ENCODE measurements at regions of chr20 and their contacts with region 1.

Region 1: DNA sequence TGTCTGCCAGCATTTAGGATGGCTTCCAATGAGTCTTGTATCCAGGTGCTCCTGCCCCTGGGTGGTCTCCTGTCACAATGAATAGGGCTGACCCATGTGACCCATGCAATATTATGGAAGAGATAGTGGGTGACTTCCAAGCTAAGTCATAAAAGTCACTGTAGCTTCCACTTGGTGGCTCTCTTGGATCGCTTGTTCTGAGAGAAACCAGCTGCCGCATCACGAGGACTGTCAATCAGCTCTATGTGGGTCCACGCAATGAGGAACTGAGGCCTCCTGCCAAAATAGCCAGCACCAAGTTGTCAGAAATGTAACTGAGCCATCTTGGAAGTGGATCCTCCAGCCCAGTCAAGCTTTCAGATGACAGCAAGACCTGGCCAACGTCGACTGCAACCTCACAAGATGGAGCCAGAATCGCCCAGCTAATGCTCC is 14.9 kb upstream of the MATN4 start:
- DNase-seq: peak; percentile 84 to 86
- H3K4me3 ChIP-seq: no peak overlapping the region
- H3K4me3 Mint-ChIP-seq: no peak overlapping the region
- H3K27ac Mint-ChIP-seq: peak overlapping the region; percentile 3
- H3K4me1 ChIP-seq: peaks cover 8% of the 10 kb centered on the region; the same call in 1 of the 2 replicates
- H3K4me1 Mint-ChIP-seq: no peaks in the 10 kb centered on the region
- H3K27me3 ChIP-seq: no peaks in the 10 kb centered on the region
- H3K27me3 Mint-ChIP-seq: no peaks in the 10 kb centered on the region
- CTCF ChIP-seq: peak; percentile 55 to 79

Region 2: DNA sequence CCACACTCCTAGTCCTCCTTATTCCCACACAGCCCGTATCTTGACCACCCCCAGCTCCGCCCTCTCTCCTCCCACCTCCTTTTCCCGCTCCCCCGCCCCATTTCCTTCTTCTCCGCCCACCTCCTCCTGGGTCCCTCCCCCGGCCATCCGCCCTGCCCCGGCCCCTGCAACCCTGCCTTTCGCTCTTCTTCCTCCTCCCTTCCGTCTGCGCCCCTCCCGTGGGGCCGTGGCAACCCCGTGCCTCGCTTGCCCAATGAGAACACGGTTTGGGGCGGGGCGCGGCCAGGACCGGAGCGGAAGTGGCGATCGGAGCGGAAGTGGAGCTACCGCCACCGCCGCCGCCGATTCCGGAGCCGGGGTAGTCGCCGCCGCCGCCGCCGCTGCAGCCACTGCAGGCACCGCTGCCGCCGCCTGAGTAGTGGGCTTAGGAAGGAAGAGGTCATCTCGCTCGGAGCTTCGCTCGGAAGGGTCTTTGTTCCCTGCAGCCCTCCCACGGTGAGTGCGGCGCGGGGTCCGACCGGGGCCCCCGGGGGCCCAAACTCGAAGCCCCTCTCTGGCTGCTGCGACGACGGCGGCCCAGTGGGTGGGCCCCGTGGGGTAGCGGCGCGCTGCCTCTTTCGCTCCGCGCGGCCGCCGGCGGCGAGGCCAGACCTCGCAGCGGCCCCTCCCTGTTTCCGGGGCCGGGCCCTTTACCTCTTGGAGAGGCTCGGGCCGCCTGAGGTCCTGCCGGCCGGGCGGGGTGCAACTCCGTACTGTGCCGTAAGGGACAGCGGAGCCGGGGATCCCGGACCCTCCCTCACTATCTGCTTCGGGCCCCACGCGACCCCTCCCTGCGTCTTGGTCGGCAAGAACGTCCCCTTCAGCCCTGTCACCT is 437.3 kb before region 1 on chr20 and contains the start of gene YWHAB:
- CTCF ChIA-PET with region 1: no interaction called
- POLR2A ChIA-PET with region 1: interaction called, 11 read pairs
- intact Hi-C with region 1: no loop called
- DNase-seq: peak; percentile 100
- H3K4me3 ChIP-seq: peak within 1 kb of the TSS; percentile 98
- H3K4me3 Mint-ChIP-seq: peak within 1 kb of the TSS; percentile 99
- H3K27ac Mint-ChIP-seq: peak within 1 kb of the TSS; percentile 97
- H3K4me1 ChIP-seq: peaks cover 34% of the 10 kb centered on the region
- H3K4me1 Mint-ChIP-seq: peaks cover 34% of the 10 kb centered on the region
- H3K27me3 ChIP-seq: no peaks in the 10 kb centered on the region
- H3K27me3 Mint-ChIP-seq: no peaks in the 10 kb centered on the region
- CTCF ChIP-seq: peak; percentile 19 to 22
- total RNA-seq, gene YWHAB: 522 and 539 TPM in 2 replicates

Region 3: DNA sequence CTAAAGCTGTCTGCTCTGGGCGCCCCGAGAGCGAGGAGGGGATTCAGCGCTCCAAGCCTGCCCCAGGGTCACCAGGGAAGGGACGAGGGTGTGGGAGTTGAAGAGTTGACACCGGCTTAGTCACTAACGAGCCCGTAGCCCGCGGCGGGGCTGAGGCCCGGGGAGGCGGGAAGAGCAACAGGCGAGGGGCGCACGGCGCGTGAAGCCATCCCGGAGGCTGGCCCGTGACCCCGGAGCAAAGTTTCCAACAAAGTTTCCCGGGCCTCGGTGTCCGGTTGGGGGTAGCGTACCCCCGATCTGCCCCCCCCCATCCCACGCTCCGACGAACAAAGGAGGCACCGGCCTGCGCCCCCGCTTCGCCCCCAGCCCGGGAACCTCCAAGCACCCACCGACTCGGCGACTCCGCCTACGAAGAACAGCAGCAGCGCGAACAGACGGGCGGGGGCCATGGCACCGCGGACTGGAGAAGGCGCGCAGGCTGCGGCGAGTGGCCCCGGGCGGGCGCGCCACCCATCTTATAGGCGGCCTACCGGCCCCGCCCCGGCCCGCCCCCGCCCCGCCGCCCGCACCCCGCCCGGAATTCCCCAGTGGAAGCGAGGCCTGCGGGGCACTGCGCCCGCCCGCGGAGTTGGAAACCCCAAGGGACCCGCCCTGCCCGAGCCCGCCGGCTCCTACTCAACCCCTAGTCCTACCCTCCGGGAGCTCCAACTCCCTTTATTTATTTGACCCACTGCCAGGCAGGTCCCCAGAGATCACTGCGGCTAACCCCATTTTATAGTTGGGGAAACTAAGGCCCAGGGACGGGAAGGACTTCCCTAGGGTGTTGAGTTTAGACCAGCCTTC is 25.2 kb after region 1 on chr20 and contains the start of gene SDC4:
- CTCF ChIA-PET with region 1: interaction called, 44 read pairs
- POLR2A ChIA-PET with region 1: interaction called, 21 read pairs
- intact Hi-C with region 1: loop called (anchors 1 kb)
- DNase-seq: peak; percentile 83 to 94
- H3K4me3 ChIP-seq: peak within 1 kb of the TSS; percentile 88
- H3K4me3 Mint-ChIP-seq: peak within 1 kb of the TSS; percentile 97
- H3K27ac Mint-ChIP-seq: peak within 1 kb of the TSS; percentile 77
- H3K4me1 ChIP-seq: peaks cover 45% of the 10 kb centered on the region
- H3K4me1 Mint-ChIP-seq: peaks cover 47% of the 10 kb centered on the region
- H3K27me3 ChIP-seq: no peaks in the 10 kb centered on the region
- H3K27me3 Mint-ChIP-seq: no peaks in the 10 kb centered on the region
- CTCF ChIP-seq: no peak
- total RNA-seq, gene SDC4: 227 and 242 TPM in 2 replicates

Region 4: DNA sequence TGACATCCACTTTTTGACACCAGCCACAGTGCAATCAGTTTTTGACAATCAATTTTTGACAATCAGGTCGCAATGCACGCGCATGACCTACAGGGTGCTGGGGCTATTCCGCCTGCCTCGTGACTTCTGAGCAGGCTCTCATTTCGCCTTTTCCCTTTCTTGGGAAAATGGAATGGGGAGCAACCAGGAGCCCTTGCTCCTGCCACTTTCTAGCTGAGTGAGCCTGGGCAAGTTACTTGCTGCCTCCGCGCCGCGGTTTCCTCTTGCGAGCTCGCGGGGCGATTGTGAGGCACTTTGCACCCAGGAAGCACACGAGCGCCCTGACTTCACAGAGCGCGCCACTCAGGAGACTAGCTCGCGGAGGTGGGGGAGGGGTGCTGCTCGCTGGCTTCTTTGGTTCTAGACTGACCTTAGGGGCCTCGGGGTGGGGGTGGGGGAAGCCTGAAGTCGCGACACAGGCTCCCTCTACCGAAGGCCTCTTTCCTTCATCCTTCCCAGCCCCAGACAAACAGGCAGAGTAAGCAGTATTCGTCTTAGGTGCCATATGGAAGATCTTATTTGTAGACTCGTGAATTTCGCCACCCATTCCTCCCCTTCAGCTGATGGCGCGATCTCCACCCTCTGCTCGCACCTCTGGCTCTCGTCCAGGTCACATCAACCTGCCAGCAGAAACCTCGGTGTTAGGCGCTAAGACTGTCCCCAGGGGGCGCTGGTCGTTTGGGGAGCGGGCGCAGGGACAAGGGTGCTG is 50.6 kb after region 1 on chr20:
- CTCF ChIA-PET with region 1: interaction called, 27 read pairs
- POLR2A ChIA-PET with region 1: interaction called, 6 read pairs
- intact Hi-C with region 1: no loop called
- DNase-seq: peak; percentile 85 to 90
- H3K4me3 ChIP-seq: no peak overlapping the region
- H3K4me3 Mint-ChIP-seq: peak overlapping the region; percentile 64
- H3K27ac Mint-ChIP-seq: no peak overlapping the region
- H3K4me1 ChIP-seq: no peaks in the 10 kb centered on the region
- H3K4me1 Mint-ChIP-seq: no peaks in the 10 kb centered on the region
- H3K27me3 ChIP-seq: no peaks in the 10 kb centered on the region
- H3K27me3 Mint-ChIP-seq: no peaks in the 10 kb centered on the region
- CTCF ChIP-seq: peak; percentile 90 to 93

Region 5: DNA sequence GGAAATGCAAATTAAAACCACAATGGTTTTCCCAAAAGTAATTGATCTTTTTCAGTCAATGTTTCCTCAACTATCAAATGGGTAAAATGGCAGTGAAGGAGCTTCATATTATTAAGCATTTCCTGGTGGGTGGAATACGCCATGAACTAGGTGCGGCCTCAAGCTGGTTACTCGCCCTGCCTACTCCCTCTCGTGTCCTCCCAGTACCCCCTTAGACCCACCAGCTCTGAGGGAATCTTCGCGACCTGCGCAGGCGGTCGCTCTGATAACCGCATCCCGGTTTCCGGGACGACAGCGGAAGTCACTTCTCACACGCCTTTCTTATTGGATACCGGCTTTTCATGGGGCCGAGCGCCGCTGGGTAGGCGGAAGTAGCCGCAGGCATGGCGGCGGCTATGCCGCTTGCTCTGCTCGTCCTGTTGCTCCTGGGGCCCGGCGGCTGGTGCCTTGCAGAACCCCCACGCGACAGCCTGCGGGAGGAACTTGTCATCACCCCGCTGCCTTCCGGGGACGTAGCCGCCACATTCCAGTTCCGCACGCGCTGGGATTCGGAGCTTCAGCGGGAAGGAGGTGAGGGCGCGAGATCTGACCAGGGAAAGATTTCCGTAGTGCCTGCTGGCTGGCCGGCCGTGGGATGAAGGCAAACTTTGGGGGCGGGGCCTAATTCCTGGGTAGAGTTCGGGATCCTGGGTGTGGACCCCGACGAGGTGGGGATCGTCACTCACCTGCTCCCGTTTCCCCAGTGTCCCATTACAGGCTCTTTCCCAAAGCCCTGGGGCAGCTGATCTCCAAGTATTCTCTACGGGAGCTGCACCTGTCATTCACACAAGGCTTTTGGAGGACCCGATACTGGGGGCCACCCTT is 93.0 kb after region 1 on chr20 and contains the start of gene PIGT:
- CTCF ChIA-PET with region 1: interaction called, 19 read pairs
- POLR2A ChIA-PET with region 1: interaction called, 7 read pairs
- intact Hi-C with region 1: loop called (anchors 1 kb)
- DNase-seq: peak; percentile 95
- H3K4me3 ChIP-seq: peak within 1 kb of the TSS; percentile 89
- H3K4me3 Mint-ChIP-seq: peak within 1 kb of the TSS; percentile 87
- H3K27ac Mint-ChIP-seq: peak within 1 kb of the TSS; percentile 92
- H3K4me1 ChIP-seq: peaks cover 13% of the 10 kb centered on the region; the same call in 1 of the 2 replicates
- H3K4me1 Mint-ChIP-seq: peaks cover 6% of the 10 kb centered on the region
- H3K27me3 ChIP-seq: no peaks in the 10 kb centered on the region
- H3K27me3 Mint-ChIP-seq: no peaks in the 10 kb centered on the region
- CTCF ChIP-seq: peak in 1 of 2 experiments; percentile 30
- total RNA-seq, gene PIGT: 239 and 259 TPM in 2 replicates

Region 6: DNA sequence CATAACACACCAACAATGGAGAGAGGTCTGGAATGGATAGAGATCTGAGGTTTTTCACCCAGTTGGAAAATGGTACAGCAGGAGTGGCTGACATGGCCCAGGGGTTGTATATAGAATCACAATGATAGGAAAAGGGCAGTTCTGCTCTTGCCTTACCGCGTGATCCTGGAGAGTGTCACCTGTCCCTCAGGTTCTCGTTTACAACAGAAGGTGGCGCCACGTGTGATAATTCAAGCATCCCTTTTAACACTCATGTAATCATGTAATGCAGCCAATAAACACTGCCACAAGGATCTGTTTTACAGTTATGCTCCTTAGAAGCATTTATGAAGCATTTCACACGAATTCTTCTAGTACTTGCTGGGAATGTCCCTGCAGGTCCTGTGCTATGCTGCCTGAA is 133.7 kb after region 1 on chr20:
- CTCF ChIA-PET with region 1: interaction called, 12 read pairs
- POLR2A ChIA-PET with region 1: no interaction called
- intact Hi-C with region 1: no loop called
- DNase-seq: peak; percentile 68 to 73
- H3K4me3 ChIP-seq: no peak overlapping the region
- H3K4me3 Mint-ChIP-seq: no peak overlapping the region
- H3K27ac Mint-ChIP-seq: no peak overlapping the region
- H3K4me1 ChIP-seq: no peaks in the 10 kb centered on the region
- H3K4me1 Mint-ChIP-seq: no peaks in the 10 kb centered on the region
- H3K27me3 ChIP-seq: no peaks in the 10 kb centered on the region
- H3K27me3 Mint-ChIP-seq: no peaks in the 10 kb centered on the region
- CTCF ChIP-seq: peak in 1 of 2 experiments; percentile 60

Region 7: GRCh38 chr20:45545754-45546453 is 222.9 kb after region 1 on chr20:
- CTCF ChIA-PET with region 1: no interaction called
- POLR2A ChIA-PET with region 1: no interaction called
- intact Hi-C with region 1: loop called (anchors 1 kb)
- DNase-seq: peak in 1 of 2 experiments; percentile 69
- H3K4me3 ChIP-seq: no peak overlapping the region
- H3K4me3 Mint-ChIP-seq: no peak overlapping the region
- H3K27ac Mint-ChIP-seq: no peak overlapping the region
- H3K4me1 ChIP-seq: no peaks in the 10 kb centered on the region
- H3K4me1 Mint-ChIP-seq: no peaks in the 10 kb centered on the region
- H3K27me3 ChIP-seq: peaks cover 3% of the 10 kb centered on the region; the same call in 1 of the 2 replicates
- H3K27me3 Mint-ChIP-seq: peaks cover 35% of the 10 kb centered on the region
- CTCF ChIP-seq: peak; percentile 66 to 88